ENCODE measurements at regions of chr12 and their contacts with region 1.

Region 1: DNA sequence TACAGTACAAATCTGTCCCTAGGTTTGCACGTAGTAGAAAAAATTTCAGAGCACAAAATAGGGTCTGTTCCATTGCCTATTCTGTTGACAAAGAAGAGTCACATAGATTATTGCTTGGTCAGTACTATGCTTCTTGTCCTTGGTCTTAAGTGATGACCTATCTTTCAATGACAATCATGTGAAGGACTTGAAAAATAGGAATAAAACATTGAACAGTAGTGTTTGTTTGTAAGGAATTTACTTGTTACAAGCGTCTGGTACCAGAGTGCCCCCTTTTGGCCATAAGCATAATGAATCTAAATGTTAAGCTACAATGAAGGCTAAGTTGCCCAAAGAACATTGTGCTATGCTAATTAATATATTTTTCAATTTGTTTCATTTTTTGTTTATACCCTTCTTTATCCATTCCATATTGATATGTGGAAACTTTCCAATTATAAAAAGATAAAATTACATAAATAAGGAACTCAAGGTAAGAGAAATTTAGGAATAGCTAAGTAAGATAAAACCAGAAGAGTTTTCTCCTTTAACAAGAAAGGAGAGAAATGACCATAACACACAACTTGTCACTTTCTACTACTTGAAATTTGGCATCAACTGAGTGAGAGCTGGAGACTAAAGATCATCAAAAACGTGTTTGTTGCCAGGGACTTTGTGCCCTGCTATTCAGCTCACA is 204.7 kb downstream of the EPS8 start:
- DNase-seq: peak; percentile 53
- H3K4me3 ChIP-seq: no peak overlapping the region
- H3K27ac ChIP-seq: no peak overlapping the region
- H3K4me1 ChIP-seq: no peaks in the 10 kb centered on the region
- H3K27me3 ChIP-seq: no peaks in the 10 kb centered on the region
- CTCF ChIP-seq: peak; percentile 56

Region 2: GRCh38 chr12:15151161-15152120 is 433.1 kb before region 1 on chr12:
- intact Hi-C with region 1: loop called (anchors 10 kb)
- DNase-seq: no peak
- H3K4me3 ChIP-seq: no peak overlapping the region
- H3K27ac ChIP-seq: peak overlapping the region; percentile 2
- H3K4me1 ChIP-seq: no peaks in the 10 kb centered on the region
- H3K27me3 ChIP-seq: no peaks in the 10 kb centered on the region
- CTCF ChIP-seq: peak; percentile 26

Region 3: DNA sequence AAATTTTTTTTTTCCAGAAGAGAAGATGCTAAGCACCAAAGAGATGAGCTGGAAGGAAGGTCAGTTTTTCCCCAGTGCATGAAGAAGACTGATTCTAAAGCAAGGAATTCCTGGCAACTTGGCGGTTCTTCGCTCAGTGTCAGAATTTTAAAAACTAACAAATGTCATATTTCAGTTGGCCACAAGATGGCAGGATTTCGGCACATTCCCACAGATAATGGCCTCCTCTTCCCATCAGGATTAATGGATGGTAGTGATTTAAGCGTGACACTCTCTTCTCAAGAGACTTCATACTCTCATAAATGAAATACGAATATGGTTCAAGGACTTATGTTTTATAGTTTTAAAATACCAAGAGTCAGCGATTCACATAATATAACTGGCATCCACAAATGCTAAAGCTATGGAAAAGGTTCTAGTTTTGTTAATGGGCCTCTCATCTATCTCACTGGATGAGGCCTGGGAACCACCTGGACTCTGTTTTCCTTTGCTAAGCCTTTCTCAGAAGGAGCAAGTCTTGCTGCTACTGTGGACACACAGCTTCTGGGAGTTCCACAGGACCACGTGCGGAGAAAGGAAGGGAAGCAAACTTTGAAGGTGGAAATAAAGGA is 308.3 kb before region 1 on chr12:
- intact Hi-C with region 1: loop called (anchors 5 kb)
- DNase-seq: peak; percentile 38
- H3K4me3 ChIP-seq: no peak overlapping the region
- H3K27ac ChIP-seq: no peak overlapping the region
- H3K4me1 ChIP-seq: no peaks in the 10 kb centered on the region
- H3K27me3 ChIP-seq: no peaks in the 10 kb centered on the region
- CTCF ChIP-seq: peak; percentile 60

Region 4: GRCh38 chr12:15939111-15939510 is 354.6 kb after region 1 on chr12:
- intact Hi-C with region 1: no loop called
- DNase-seq: no peak
- H3K4me3 ChIP-seq: no peak overlapping the region
- H3K27ac ChIP-seq: no peak overlapping the region
- H3K4me1 ChIP-seq: no peaks in the 10 kb centered on the region
- H3K27me3 ChIP-seq: no peaks in the 10 kb centered on the region
- CTCF ChIP-seq: no peak